Lower leg skin (tissue), 4 donors: ENCODE measurements at regions of chr15 and their contacts with region 1.

Region 1: DNA sequence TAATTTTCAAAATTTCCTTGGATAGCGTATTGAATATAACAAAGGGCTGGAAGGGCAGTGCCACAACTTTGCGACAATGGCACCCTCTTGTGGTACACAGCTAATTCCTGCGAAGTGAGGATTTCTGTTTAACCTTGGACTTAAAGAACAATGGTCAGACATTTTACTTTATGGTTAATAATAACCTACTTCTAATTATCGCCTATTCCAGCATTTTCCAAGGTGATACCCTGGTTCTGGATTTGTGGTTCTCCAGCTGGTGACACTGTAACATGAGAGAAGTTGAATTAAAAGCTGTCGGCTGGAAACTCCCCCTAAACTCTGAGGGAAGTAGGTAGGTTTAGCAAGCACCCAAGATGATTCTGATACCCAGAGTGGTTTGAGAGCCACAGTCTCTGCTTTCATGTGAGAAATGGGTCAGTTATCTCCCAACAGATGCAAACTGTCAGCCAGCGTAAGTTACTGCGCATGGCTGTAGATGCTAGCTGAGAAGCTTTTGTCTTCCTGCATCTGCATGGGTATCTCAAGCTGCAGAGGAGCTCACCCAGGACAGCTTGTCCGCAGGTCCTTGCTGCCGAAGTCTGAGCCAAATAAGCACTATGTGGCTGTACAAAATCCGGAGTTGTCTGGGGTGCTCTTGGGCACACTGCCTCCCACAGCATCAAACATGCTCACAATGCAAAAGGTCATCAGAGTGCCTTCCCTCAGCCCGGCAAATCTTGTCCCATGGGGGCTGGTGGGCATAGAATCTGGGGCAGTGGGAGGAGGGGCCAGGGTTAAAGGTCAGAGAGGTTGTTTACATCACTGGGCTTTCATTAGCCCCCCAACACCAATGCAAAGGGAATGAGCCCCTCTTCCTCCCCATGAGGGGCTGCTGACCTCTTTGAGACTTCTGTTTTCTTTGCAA is 6.6 kb upstream of the CHSY1 start:
- DNase-seq: no peak
- H3K4me3 ChIP-seq: no peak overlapping the region
- CTCF ChIP-seq: peak in 1 of 3 donors; percentile 41
- POLR2A ChIP-seq: no peak

Region 2: DNA sequence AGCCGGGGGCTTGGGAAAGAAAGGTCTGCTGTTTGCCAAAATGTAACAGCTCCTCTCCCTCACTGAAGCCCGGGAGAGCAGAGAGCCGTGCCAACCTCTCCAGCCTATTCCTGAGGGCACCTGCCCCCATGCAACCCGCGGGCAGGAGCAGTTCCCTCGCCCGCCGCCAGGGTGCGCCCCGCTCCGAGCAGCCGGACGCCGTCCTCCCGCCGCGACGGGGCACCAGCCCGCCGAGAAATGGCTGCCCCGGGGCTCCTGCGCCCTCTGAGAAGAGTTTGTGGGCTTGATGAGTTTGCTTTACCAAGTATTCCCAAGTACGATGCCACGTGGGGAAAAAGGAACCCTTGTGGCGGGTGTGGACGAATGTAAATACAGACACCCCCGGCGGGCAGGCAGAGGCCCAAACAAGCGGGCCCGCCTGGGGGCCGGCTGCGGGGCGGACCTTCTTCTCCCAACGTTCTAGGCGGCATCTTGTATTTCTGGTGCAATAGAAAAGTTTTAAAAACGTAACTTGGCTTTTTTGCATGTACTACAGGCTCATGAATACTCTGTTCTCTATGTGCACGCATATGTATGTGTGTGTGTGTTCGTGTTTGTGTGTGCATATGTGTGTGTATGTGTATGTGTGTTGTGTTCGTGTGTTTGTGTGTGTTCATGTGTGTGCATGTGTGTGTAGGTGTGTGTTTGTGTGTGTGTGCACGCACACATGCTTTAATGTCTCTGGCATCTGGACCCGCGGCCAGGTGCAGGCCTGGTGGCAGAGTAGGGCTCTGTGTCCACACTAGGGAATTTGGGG is 169.5 kb before region 1 on chr15:
- intact Hi-C with region 1: loop called (anchors 5 kb)
- DNase-seq: peak; percentile 42 to 95
- H3K4me3 ChIP-seq: no peak overlapping the region
- CTCF ChIP-seq: peak in 2 of 3 donors; percentile 74 to 88
- POLR2A ChIP-seq: no peak

Region 3: DNA sequence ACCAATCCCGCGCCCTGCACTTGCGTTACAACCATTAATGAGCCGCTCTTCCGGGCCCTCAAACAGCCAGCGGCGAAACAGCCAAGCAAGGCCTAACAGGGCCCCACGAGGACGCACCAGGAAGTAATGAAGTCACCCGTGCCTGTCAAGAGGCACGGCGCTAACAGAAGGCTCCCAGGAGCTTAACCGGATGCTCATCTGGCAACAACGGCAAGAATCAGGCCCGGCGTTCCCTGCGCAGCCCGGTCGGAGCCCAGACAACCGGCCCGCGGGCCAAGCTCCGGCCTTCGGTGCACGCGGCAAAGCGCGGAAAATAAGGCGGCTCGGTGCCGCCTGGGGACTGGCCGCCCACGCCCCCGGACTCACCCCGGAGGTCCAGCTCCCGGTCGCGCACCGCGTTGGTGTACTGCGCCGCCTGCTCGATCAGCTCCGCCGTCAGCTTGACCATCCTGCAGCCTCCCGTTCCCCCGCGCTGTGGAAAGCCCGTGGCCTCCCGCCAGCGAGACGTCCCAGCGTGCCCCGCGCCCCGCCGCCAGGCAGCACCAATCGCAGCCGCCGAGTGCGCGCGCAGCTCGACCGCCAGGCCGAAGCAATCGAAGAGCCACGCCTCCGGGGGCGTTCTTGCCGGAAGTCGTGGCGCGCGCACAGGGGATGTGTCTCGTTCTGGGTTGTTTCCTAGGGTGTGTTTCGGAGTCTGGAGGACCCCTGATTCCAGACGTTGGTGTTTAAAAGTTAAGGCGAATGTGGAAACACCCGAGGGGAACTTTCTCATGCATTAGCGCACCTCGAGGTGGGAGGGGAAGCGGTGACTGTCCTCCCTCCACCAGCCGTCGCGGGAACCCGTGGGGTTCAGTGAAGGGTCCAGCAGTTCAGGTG is 36.5 kb after region 1 on chr15 and contains the start of gene SNRPA1:
- intact Hi-C with region 1: no loop called
- DNase-seq: peak; percentile 95 to 99
- H3K4me3 ChIP-seq: peak within 1 kb of the TSS; percentile 88
- CTCF ChIP-seq: no peak
- POLR2A ChIP-seq: peak in 1 of 2 donors; percentile 15
- total RNA-seq, gene SNRPA1: 29.0 to 48.4 (median 38.5) TPM